ENCODE measurements at regions of chr12 and their contacts with region 1.

Region 1: GRCh38 chr12:5480218-5480937 is 48.5 kb downstream of the NTF3 start:
- DNase-seq: no peak
- H3K4me3 ChIP-seq: no peak overlapping the region
- H3K27me3 ChIP-seq: no peaks in the 10 kb centered on the region
- CTCF ChIP-seq: no peak

Region 2: DNA sequence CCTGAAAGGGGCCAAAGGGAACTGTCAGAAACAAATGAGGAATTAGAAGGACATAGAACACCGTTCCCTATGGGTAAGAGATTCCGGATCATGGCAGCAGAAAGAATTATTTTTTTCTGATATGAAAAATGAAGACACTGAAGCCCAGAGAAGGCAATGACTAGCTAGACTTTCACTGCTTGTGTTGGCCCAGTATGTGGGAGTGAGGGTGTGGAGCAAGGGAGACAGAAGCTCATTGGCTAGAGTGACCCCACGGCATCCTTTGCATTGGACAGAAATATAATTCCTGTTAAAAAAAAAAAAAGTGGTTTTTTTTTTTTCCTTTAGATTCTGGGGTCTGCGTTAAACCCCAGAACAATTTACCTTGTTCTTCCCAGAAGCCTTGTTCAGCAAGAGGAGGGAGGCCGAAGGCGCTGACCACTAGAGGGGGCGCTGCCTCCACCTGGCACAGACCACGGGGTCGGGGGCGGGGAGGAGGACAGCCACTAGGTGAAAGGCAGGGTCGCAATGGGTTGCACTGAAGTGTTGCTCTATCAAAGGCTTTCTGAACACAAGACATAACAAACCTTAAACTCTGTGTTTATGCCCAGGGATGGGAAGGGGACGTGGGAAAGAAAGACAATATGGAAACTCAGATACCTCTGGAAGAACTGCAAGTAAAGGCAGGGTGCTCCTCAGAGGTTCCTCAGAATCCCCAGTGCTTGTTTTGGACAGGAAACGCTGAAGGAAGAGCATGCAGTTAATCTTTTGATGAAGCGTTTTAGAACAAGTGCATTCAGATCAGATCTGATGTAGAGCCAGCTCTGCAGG is 279.9 kb before region 1 on chr12:
- CTCF ChIA-PET with region 1: no interaction called
- POLR2A ChIA-PET with region 1: interaction called, 29 read pairs
- DNase-seq: no peak
- H3K4me3 ChIP-seq: no peak overlapping the region
- H3K27me3 ChIP-seq: peaks cover 1% of the 10 kb centered on the region; the same call in 1 of the 2 replicates
- CTCF ChIP-seq: peak; percentile 66

Region 3: GRCh38 chr12:5466521-5466960 is 13.8 kb before region 1 on chr12:
- CTCF ChIA-PET with region 1: no interaction called
- POLR2A ChIA-PET with region 1: no interaction called
- DNase-seq: no peak
- H3K4me3 ChIP-seq: no peak overlapping the region
- H3K27me3 ChIP-seq: no peaks in the 10 kb centered on the region
- CTCF ChIP-seq: no peak

Measured in BJ (cell line).